Heart left ventricle (tissue), 16 donors: ENCODE measurements at regions of chr5 and their contacts with region 1.

Region 1: DNA sequence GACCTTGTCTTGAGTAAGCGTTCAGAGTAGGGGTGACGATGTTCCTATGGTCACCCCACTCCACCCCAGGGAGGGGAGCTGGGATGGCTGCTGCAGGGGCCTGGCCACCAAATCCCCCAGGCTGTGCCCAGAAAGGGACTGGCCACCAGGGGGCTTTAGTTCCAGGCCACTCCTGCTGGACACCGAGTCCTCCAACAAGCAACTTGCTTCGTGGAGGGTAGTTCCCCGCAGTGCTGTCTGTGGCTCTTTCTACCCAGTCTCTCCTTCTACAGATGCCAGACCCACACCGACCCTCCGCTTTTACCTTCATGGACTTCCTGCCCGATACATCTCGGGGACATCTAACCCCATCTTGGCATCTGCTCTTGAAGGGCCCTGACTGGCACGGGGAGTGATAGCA is 35.7 kb upstream of the GABRP start:
- DNase-seq: peak in 3 of 5 donors; percentile 28 to 47 (median 36)
- ATAC-seq: peak; percentile 8 to 21 (median 14)
- H3K4me3 ChIP-seq: no peak overlapping the region
- H3K27ac ChIP-seq: peak overlapping the region; percentile 66 to 95 (median 82)
- H3K4me1 ChIP-seq: peaks cover 2 to 73% (median 58%) of the 10 kb centered on the region in 12 donors
- H3K27me3 ChIP-seq: peaks cover 0 to 15% (median 0%) of the 10 kb centered on the region in 9 donors
- CTCF ChIP-seq: peak; percentile 30 to 60 (median 44)
- POLR2A ChIP-seq: no peak

Region 2: DNA sequence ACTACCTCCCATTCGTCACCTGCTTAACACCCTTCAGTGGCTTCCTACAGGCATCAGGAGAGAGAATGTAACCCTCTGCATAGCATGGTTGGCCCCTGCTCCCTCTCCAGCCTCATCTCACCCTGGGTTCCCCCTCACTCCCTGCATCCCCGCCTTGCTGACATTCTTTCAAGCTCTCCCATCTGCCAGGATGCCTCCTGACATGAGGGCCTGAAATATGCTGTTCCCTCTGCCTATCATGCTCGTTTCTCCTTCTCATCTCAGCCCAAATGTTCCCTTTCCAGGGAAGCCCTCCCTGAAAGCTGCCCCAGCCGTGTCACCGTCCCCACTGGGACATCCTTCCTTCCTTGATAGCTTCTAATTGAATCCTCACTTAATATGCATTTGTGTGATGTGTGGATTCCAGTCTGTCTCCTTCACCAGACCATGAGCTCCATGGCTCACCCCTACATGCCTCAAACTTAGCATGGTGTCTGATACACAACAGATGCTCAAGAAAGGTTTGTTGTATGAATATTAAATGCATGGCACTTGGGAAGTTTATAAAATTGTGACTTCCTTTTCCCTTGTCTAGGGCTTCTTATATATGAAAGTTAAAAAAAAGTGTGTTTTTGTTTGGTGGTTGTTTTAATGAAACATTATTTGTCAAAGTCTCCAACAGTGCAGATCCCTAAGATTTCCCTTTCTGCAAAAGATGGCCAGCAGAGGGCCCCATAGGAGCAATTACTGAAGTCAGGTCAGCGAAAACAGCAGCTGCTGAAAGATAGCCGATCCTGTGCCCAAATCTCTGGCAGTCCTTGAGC is 522.3 kb before region 1 on chr5:
- intact Hi-C with region 1: no loop called
- DNase-seq: peak; percentile 70 to 82 (median 71)
- ATAC-seq: peak in 3 of 4 donors; percentile 73 to 82 (median 80)
- H3K4me3 ChIP-seq: no peak overlapping the region
- H3K27ac ChIP-seq: no peak overlapping the region
- H3K4me1 ChIP-seq: peaks cover 0 to 34% (median 0%) of the 10 kb centered on the region in 12 donors
- H3K27me3 ChIP-seq: no peaks in the 10 kb centered on the region
- CTCF ChIP-seq: peak; percentile 63 to 86 (median 78)
- POLR2A ChIP-seq: no peak

Region 3: GRCh38 chr5:170638454-170639220 is 109.2 kb before region 1 on chr5:
- intact Hi-C with region 1: loop called in 6 of 10 experiments (anchors 2 to 5 kb)
- DNase-seq: peak; percentile 52 to 81 (median 62)
- ATAC-seq: peak; percentile 18 to 82 (median 67)
- H3K4me3 ChIP-seq: no peak overlapping the region
- H3K27ac ChIP-seq: no peak overlapping the region
- H3K4me1 ChIP-seq: peaks cover 0 to 16% (median 11%) of the 10 kb centered on the region in 12 donors
- H3K27me3 ChIP-seq: peaks cover 0 to 3% (median 0%) of the 10 kb centered on the region in 9 donors
- CTCF ChIP-seq: peak; percentile 78 to 94 (median 88)
- POLR2A ChIP-seq: no peak

Region 4: GRCh38 chr5:170651604-170652277 is 96.1 kb before region 1 on chr5:
- intact Hi-C with region 1: no loop called
- DNase-seq: no peak
- ATAC-seq: no peak
- H3K4me3 ChIP-seq: no peak overlapping the region
- H3K27ac ChIP-seq: no peak overlapping the region
- H3K4me1 ChIP-seq: peaks cover 0 to 7% (median 0%) of the 10 kb centered on the region in 12 donors
- H3K27me3 ChIP-seq: peaks cover 0 to 12% (median 0%) of the 10 kb centered on the region in 9 donors
- CTCF ChIP-seq: no peak
- POLR2A ChIP-seq: no peak

Region 5: GRCh38 chr5:170791325-170791954 is 43.6 kb after region 1 on chr5:
- intact Hi-C with region 1: loop called (anchors 1 to 2 kb)
- DNase-seq: peak in 4 of 5 donors; percentile 67 to 76 (median 72)
- ATAC-seq: peak; percentile 61 to 88 (median 78)
- H3K4me3 ChIP-seq: no peak overlapping the region
- H3K27ac ChIP-seq: peak overlapping the region in 3 of 12 donors; percentile 38 to 78 (median 47)
- H3K4me1 ChIP-seq: peaks cover 0 to 41% (median 7%) of the 10 kb centered on the region in 12 donors
- H3K27me3 ChIP-seq: no peaks in the 10 kb centered on the region
- CTCF ChIP-seq: peak; percentile 46 to 80 (median 63)
- POLR2A ChIP-seq: no peak

Region 6: GRCh38 chr5:170861837-170862766 is 114.3 kb after region 1 on chr5 and contains the start of gene RANBP17:
- intact Hi-C with region 1: loop called in 1 of 10 experiments (anchors 10 kb)
- DNase-seq: peak; percentile 41 to 72 (median 58)
- ATAC-seq: peak; percentile 66 to 97 (median 93)
- H3K4me3 ChIP-seq: peak within 1 kb of the TSS; percentile 59 to 91 (median 77)
- H3K27ac ChIP-seq: peak within 1 kb of the TSS in 9 of 12 donors; percentile 6 to 72 (median 45)
- H3K4me1 ChIP-seq: peaks cover 0 to 16% (median 5%) of the 10 kb centered on the region in 12 donors
- H3K27me3 ChIP-seq: peaks cover 0 to 8% (median 0%) of the 10 kb centered on the region in 9 donors
- CTCF ChIP-seq: peak in 2 of 12 donors; percentile 10 to 21
- POLR2A ChIP-seq: no peak
- total RNA-seq, gene RANBP17: 2.0 to 11.5 (median 3.8) TPM

Region 7: GRCh38 chr5:170896779-170897178 is 148.9 kb after region 1 on chr5:
- intact Hi-C with region 1: loop called in 1 of 10 experiments (anchors 10 kb)
- DNase-seq: no peak
- ATAC-seq: no peak
- H3K4me3 ChIP-seq: no peak overlapping the region
- H3K27ac ChIP-seq: no peak overlapping the region
- H3K4me1 ChIP-seq: no peaks in the 10 kb centered on the region
- H3K27me3 ChIP-seq: no peaks in the 10 kb centered on the region
- CTCF ChIP-seq: peak in 9 of 12 donors; percentile 7 to 40 (median 38)
- POLR2A ChIP-seq: no peak

Region 8: GRCh38 chr5:170917113-170917512 is 169.3 kb after region 1 on chr5:
- intact Hi-C with region 1: loop called in 1 of 10 experiments (anchors 10 kb)
- DNase-seq: no peak
- ATAC-seq: no peak
- H3K4me3 ChIP-seq: no peak overlapping the region
- H3K27ac ChIP-seq: no peak overlapping the region
- H3K4me1 ChIP-seq: no peaks in the 10 kb centered on the region
- H3K27me3 ChIP-seq: no peaks in the 10 kb centered on the region
- CTCF ChIP-seq: peak in 3 of 12 donors; percentile 5 to 14 (median 9)
- POLR2A ChIP-seq: no peak

Region 9: GRCh38 chr5:171336521-171337209 is 588.8 kb after region 1 on chr5:
- intact Hi-C with region 1: loop called in 9 of 10 experiments (anchors 2 to 10 kb)
- DNase-seq: peak in 1 of 5 donors; percentile 26
- ATAC-seq: peak in 3 of 4 donors; percentile 72 to 75 (median 73)
- H3K4me3 ChIP-seq: peak overlapping the region in 11 of 12 donors; percentile 5 to 56 (median 35)
- H3K27ac ChIP-seq: no peak overlapping the region
- H3K4me1 ChIP-seq: peaks cover 0 to 11% (median 0%) of the 10 kb centered on the region in 12 donors
- H3K27me3 ChIP-seq: peaks cover 0 to 78% (median 22%) of the 10 kb centered on the region in 9 donors
- CTCF ChIP-seq: peak; percentile 26 to 72 (median 58)
- POLR2A ChIP-seq: no peak